GM12878 (cell line): ENCODE measurements at regions of chr16 and their contacts with region 1.

Region 1: GRCh38 chr16:57757326-57757786 is 21.8 kb downstream of the KATNB1 start:
- DNase-seq: no peak
- ATAC-seq: peak; percentile 98
- H3K4me3 ChIP-seq: no peak overlapping the region
- H3K27ac ChIP-seq: no peak overlapping the region
- H3K4me1 ChIP-seq: no peaks in the 10 kb centered on the region
- H3K27me3 ChIP-seq: no peaks in the 10 kb centered on the region
- CTCF ChIP-seq: peak; percentile 96 to 97 (median 97)
- EP300 ChIP-seq: no peak
- POLR2A ChIP-seq: no peak
- RAD21 ChIP-seq: peak; percentile 81

Region 2: GRCh38 chr16:57700781-57701551 is 56.4 kb before region 1 on chr16:
- CTCF ChIA-PET with region 1: no interaction called
- POLR2A ChIA-PET with region 1: no interaction called
- RAD21 ChIA-PET with region 1: no interaction called
- SMC1A ChIA-PET with region 1: no interaction called
- in situ Hi-C with region 1: no loop called
- intact Hi-C with region 1: no loop called
- DNase-seq: no peak
- ATAC-seq: no peak
- H3K4me3 ChIP-seq: no peak overlapping the region
- H3K27ac ChIP-seq: no peak overlapping the region
- H3K4me1 ChIP-seq: no peaks in the 10 kb centered on the region
- H3K27me3 ChIP-seq: no peaks in the 10 kb centered on the region; a peak in 1 of 4 replicates
- CTCF ChIP-seq: no peak
- EP300 ChIP-seq: no peak
- POLR2A ChIP-seq: no peak
- RAD21 ChIP-seq: no peak

Region 3: GRCh38 chr16:57775661-57776469 is 18.5 kb after region 1 on chr16:
- CTCF ChIA-PET with region 1: no interaction called
- POLR2A ChIA-PET with region 1: no interaction called
- RAD21 ChIA-PET with region 1: no interaction called
- SMC1A ChIA-PET with region 1: no interaction called
- in situ Hi-C with region 1: no loop called
- intact Hi-C with region 1: no loop called
- DNase-seq: no peak
- ATAC-seq: peak; percentile 89
- H3K4me3 ChIP-seq: no peak overlapping the region
- H3K27ac ChIP-seq: no peak overlapping the region
- H3K4me1 ChIP-seq: no peaks in the 10 kb centered on the region
- H3K27me3 ChIP-seq: no peaks in the 10 kb centered on the region
- CTCF ChIP-seq: peak in 2 of 3 experiments; percentile 18 to 41; a peak in 3 of 6 replicates
- EP300 ChIP-seq: no peak
- POLR2A ChIP-seq: no peak
- RAD21 ChIP-seq: peak; percentile 25; the same call in 1 of the 2 replicates

Region 4: DNA sequence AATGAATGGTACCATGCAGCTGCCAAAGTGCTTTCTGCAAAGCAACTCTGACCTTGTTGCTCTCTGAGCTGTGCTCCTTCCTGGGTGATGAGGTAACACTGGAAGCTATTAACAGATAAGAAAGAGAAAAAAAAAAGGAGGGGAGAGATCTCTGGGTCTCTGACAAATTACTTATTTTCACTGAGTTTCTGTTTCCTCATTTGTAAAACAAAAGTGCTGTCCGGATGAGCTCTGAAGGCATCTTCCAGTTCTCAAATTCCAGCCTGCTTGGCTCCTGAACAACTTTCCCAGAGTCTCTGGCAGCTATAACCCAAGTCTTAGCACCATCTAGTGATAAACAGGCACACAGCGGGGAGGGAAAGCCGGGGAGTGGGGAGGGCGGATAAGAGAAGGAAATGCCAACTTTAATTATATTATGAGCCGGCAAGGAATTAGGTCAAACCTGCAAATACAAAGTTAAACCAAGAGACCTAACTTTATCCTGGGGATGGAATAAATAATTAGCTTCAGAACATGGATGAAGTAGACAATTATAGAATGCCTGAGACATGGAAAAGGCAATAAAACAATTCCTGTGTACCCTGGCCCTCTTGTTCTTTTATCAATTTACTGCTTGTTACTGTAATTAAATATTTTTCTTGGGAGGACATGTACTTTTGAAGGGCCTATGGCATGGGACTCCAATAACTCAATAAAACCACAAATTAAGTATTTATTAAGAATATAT is 106.2 kb after region 1 on chr16:
- CTCF ChIA-PET with region 1: interaction called, 9 read pairs
- POLR2A ChIA-PET with region 1: no interaction called
- RAD21 ChIA-PET with region 1: interaction called, 3 read pairs
- SMC1A ChIA-PET with region 1: no interaction called
- in situ Hi-C with region 1: no loop called
- intact Hi-C with region 1: loop called (anchors 5 kb)
- DNase-seq: no peak
- ATAC-seq: no peak
- H3K4me3 ChIP-seq: no peak overlapping the region
- H3K27ac ChIP-seq: no peak overlapping the region
- H3K4me1 ChIP-seq: no peaks in the 10 kb centered on the region
- H3K27me3 ChIP-seq: no peaks in the 10 kb centered on the region
- CTCF ChIP-seq: peak; percentile 9 to 37 (median 17); a peak in 3 of 6 replicates
- EP300 ChIP-seq: no peak
- POLR2A ChIP-seq: no peak
- RAD21 ChIP-seq: peak; percentile 42

Region 5: GRCh38 chr16:58000706-58001676 is 243.6 kb after region 1 on chr16 and contains the start of gene USB1:
- CTCF ChIA-PET with region 1: interaction called, 4 read pairs
- POLR2A ChIA-PET with region 1: no interaction called
- RAD21 ChIA-PET with region 1: no interaction called
- SMC1A ChIA-PET with region 1: interaction called, 3 read pairs
- in situ Hi-C with region 1: loop called (anchors 5 kb)
- intact Hi-C with region 1: loop called (anchors 1 kb)
- DNase-seq: peak; percentile 56
- ATAC-seq: peak; percentile 91
- H3K4me3 ChIP-seq: peak within 1 kb of the TSS; percentile 98
- H3K27ac ChIP-seq: peak within 1 kb of the TSS; percentile 78
- H3K4me1 ChIP-seq: peaks cover 13% of the 10 kb centered on the region
- H3K27me3 ChIP-seq: no peaks in the 10 kb centered on the region
- CTCF ChIP-seq: peak; percentile 42 to 75 (median 57)
- EP300 ChIP-seq: no peak
- POLR2A ChIP-seq: peak; percentile 88
- RAD21 ChIP-seq: peak; percentile 56; the same call in 1 of the 2 replicates
- polyA plus RNA-seq, gene USB1: 7.9 to 8.7 TPM